ENCODE measurements at regions of chr3 and their contacts with region 1.

Region 1: DNA sequence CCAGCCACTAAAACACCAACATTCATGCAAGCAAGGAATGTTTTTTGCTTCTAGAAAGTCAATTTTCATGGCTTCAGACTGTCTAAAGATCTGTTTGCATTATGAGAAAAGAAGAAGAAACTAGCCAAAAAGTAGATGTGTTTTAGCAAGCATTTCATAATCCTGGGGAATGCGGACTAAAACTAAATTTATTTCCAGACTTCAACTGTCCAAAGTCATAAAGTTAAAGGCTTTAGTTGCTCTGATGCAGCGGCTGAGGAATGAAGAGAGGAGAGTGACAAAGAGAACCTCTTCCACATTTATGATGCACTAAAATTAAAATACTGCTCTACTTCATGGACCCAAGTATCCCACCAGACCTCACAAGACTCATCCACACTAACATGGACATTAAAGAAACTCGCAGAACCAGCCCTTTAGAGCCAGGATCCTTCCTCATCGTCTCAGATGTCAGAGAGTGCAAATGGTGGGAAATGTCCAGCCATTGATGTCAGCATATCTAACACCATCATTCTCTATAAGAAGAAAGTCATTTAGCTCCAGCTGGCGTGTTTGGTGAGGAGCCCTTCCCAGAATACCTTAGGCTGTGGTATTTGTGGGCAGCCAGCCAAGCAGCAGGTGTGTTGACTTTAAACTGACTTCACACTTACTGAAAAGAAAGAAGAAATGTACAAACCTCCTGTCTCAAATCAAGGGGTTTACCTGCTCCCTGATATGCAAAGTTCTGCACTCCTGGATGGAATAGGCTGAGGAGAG is 17.4 kb downstream of the FYCO1 start:
- DNase-seq: peak; percentile 91
- H3K4me3 Mint-ChIP-seq: peak overlapping the region; percentile 80
- H3K27ac Mint-ChIP-seq: peak overlapping the region; percentile 95
- H3K4me1 Mint-ChIP-seq: peaks cover 84% of the 10 kb centered on the region
- H3K27me3 Mint-ChIP-seq: no peaks in the 10 kb centered on the region

Region 2: GRCh38 chr3:44954962-44955361 is 1023.2 kb before region 1 on chr3:
- intact Hi-C with region 1: no loop called
- DNase-seq: no peak
- H3K4me3 Mint-ChIP-seq: no peak overlapping the region
- H3K27ac Mint-ChIP-seq: no peak overlapping the region
- H3K4me1 Mint-ChIP-seq: no peaks in the 10 kb centered on the region
- H3K27me3 Mint-ChIP-seq: no peaks in the 10 kb centered on the region

Region 3: GRCh38 chr3:45964139-45964538 is 14.0 kb before region 1 on chr3:
- intact Hi-C with region 1: loop called (anchors 1 kb)
- DNase-seq: peak; percentile 80
- H3K4me3 Mint-ChIP-seq: peak overlapping the region; percentile 67
- H3K27ac Mint-ChIP-seq: peak overlapping the region; percentile 81
- H3K4me1 Mint-ChIP-seq: peaks cover 69% of the 10 kb centered on the region
- H3K27me3 Mint-ChIP-seq: no peaks in the 10 kb centered on the region

Region 4: GRCh38 chr3:46017720-46018119 is 39.5 kb after region 1 on chr3:
- intact Hi-C with region 1: loop called (anchors 2 kb)
- DNase-seq: no peak
- H3K4me3 Mint-ChIP-seq: peak overlapping the region; percentile 4
- H3K27ac Mint-ChIP-seq: peak overlapping the region; percentile 79
- H3K4me1 Mint-ChIP-seq: peaks cover 42% of the 10 kb centered on the region
- H3K27me3 Mint-ChIP-seq: peaks cover 10% of the 10 kb centered on the region

Region 5: GRCh38 chr3:46065294-46065721 is 87.1 kb after region 1 on chr3:
- intact Hi-C with region 1: loop called (anchors 1 kb)
- DNase-seq: peak; percentile 93
- H3K4me3 Mint-ChIP-seq: peak overlapping the region; percentile 39
- H3K27ac Mint-ChIP-seq: peak overlapping the region; percentile 68
- H3K4me1 Mint-ChIP-seq: peaks cover 51% of the 10 kb centered on the region
- H3K27me3 Mint-ChIP-seq: peaks cover 53% of the 10 kb centered on the region

Measured in activated CD4-positive, alpha-beta T cell treated with anti-CD3 and anti-CD28 coated beads, Interleukin-2, amount 10 ng/mL, durations not matched to agents 24 days and 14 days (primary cell).